Activated CD8-positive, alpha-beta memory T cell treated with anti-CD3 and anti-CD28 coated beads, Interleukin-2, amount 10 ng/mL, durations not matched to agents 7 days and 5 days (primary cell): ENCODE measurements at regions of chr15 and their contacts with region 1.

Region 1: GRCh38 chr15:65638681-65639089 is 16.9 kb downstream of the SLC24A1 start:
- DNase-seq: peak; percentile 62
- ATAC-seq: peak; percentile 78
- H3K4me3 Mint-ChIP-seq: peak overlapping the region; percentile 52
- H3K27ac Mint-ChIP-seq: peak overlapping the region; percentile 3
- H3K4me1 Mint-ChIP-seq: peaks cover 17% of the 10 kb centered on the region
- H3K27me3 Mint-ChIP-seq: no peaks in the 10 kb centered on the region

Region 2: DNA sequence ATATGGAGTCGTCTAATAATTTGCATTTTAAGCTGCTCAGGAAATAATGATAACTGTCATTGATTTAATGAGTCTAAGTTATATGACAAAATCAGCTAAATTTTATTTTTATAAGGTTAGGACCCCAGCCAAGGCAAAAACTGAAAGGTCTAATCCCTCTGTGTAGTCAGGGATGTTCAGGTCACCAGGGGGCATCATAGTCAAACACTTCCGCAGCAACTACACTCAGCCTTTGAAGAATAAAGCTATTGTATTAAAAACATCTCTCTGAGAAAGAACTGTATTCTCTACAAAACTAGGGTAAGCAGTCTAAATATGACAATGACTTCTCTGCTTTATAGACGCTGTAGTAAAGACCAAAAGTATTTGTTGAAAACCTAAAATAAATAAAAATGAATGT is 42.7 kb before region 1 on chr15:
- CTCF ChIA-PET with region 1: interaction called, 10 read pairs
- DNase-seq: no peak
- ATAC-seq: no peak
- H3K4me3 Mint-ChIP-seq: no peak overlapping the region
- H3K27ac Mint-ChIP-seq: no peak overlapping the region
- H3K4me1 Mint-ChIP-seq: peaks cover 3% of the 10 kb centered on the region
- H3K27me3 Mint-ChIP-seq: no peaks in the 10 kb centered on the region

Region 3: DNA sequence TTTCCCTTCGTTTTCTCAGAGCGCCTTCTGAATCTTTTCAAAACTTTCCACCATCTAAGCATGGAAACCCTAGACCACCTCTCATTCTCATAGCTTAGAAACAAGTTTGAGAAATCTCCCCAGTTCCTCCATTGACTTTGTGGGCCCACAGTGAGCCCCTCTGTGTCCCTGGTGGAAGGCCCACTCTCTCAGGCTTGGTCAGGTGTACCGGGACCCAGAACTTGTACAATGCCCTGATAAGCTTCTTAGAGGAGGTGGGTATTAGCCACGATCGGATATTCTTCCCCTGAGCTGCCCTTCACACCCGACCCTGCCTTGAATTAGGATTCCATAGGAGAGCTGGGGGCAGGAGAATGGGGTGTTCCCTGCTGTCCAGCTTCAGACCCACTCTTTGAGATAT is 17.0 kb before region 1 on chr15 and contains the start of gene SLC24A1:
- CTCF ChIA-PET with region 1: interaction called, 26 read pairs
- DNase-seq: no peak
- ATAC-seq: no peak
- H3K4me3 Mint-ChIP-seq: no peak within 1 kb of the TSS
- H3K27ac Mint-ChIP-seq: no peak within 1 kb of the TSS
- H3K4me1 Mint-ChIP-seq: peaks cover 3% of the 10 kb centered on the region
- H3K27me3 Mint-ChIP-seq: peaks cover 3% of the 10 kb centered on the region
- total RNA-seq, gene SLC24A1: 4.2 to 4.3 TPM

Region 4: GRCh38 chr15:65650312-65651041 is 11.8 kb after region 1 on chr15:
- CTCF ChIA-PET with region 1: interaction called, 15 read pairs
- DNase-seq: no peak
- ATAC-seq: no peak
- H3K4me3 Mint-ChIP-seq: no peak overlapping the region
- H3K27ac Mint-ChIP-seq: peak overlapping the region; percentile 53
- H3K4me1 Mint-ChIP-seq: peaks cover 9% of the 10 kb centered on the region
- H3K27me3 Mint-ChIP-seq: no peaks in the 10 kb centered on the region

Region 5: GRCh38 chr15:65690778-65691177 is 52.1 kb after region 1 on chr15:
- CTCF ChIA-PET with region 1: no interaction called
- DNase-seq: no peak
- ATAC-seq: no peak
- H3K4me3 Mint-ChIP-seq: no peak overlapping the region
- H3K27ac Mint-ChIP-seq: no peak overlapping the region
- H3K4me1 Mint-ChIP-seq: peaks cover 2% of the 10 kb centered on the region
- H3K27me3 Mint-ChIP-seq: no peaks in the 10 kb centered on the region

Region 6: DNA sequence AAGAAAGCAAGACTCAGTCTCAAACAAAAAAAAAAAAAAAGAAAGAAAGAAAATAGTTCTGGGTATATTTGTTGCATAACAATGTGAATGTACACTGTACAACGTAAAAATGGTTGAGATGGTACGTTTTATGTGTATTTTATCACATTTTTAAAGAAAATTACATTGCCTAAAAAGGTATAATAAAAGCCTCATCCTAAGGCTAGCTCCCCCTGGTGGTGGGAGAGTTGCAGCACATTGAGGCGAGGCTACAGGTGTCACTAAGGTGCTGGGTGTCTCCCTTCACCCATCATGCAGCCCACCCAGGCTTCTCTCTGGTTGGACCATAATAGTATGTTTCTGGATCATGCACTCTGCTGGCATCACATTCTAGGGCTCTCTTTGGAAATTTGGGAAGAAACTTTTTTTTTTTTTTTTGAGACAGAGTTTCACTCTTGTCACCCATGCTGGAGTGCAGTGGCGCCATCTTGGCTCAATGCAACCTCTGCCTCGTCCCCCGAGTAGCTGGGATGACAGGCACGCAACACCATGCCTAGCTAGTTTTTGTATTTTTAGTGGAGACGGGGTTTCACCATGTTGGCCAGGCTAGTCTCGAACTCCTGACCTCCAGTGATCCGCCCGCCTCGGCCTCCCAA is 218.3 kb after region 1 on chr15:
- CTCF ChIA-PET with region 1: interaction called, 35 read pairs
- DNase-seq: peak; percentile 89
- ATAC-seq: peak; percentile 89
- H3K4me3 Mint-ChIP-seq: no peak overlapping the region
- H3K27ac Mint-ChIP-seq: no peak overlapping the region
- H3K4me1 Mint-ChIP-seq: peaks cover 10% of the 10 kb centered on the region
- H3K27me3 Mint-ChIP-seq: peaks cover 12% of the 10 kb centered on the region